Heart left ventricle (tissue), 16 donors: ENCODE measurements at regions of chr20 and their contacts with region 1.

Region 1: DNA sequence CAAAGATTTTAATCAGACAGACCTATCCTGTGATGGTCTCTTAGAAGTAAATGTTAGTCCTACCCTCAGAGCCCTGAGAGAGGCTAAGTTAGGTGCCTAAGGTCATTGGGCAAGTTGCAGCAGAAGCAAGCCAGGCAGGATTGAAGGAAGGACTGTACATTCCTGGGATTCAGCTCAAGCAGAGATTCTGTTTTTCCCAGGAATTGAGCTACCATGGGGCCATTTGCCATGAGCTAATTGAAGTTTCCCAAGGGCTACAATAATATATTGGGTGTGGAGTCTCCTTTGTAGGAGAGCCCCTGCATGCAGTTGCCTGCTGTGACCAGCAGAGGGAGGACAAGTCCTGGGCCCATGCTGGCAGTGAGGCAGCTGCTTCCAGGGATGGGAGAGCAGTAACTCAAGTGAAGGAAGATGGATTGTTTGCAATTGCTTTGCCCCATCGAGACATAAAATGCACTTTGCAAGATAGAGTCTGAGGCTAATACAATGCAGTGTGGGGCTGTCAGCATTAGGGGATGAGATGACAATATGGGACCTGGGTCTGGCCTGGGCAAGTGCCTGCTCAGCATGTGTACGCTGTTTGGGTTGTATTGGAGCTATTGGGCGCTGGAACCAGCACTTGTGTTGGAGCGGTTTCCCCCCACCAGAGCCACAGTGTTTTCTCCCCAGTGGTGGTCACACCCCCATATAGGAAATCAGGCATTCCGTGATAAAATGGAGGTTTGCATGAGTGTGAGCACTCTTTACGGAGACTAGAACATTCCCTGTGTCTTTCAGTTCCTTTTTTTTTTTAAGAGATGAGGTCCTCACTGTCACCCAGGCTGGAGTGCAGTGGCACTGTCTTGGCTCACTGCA is 27.9 kb downstream of the DNMT3B start:
- DNase-seq: peak; percentile 72 to 87 (median 75)
- ATAC-seq: peak; percentile 79 to 90 (median 88)
- H3K4me3 ChIP-seq: no peak overlapping the region
- H3K27ac ChIP-seq: no peak overlapping the region
- H3K4me1 ChIP-seq: peaks cover 0 to 15% (median 5%) of the 10 kb centered on the region in 12 donors
- H3K27me3 ChIP-seq: no peaks in the 10 kb centered on the region
- CTCF ChIP-seq: peak; percentile 96 to 99 (median 98)
- POLR2A ChIP-seq: no peak

Region 2: GRCh38 chr20:32877507-32877906 is 87.4 kb after region 1 on chr20:
- intact Hi-C with region 1: no loop called
- DNase-seq: peak in 1 of 5 donors; percentile 31
- ATAC-seq: peak in 1 of 4 donors; percentile 11
- H3K4me3 ChIP-seq: no peak overlapping the region
- H3K27ac ChIP-seq: no peak overlapping the region
- H3K4me1 ChIP-seq: peaks cover 0 to 5% (median 0%) of the 10 kb centered on the region in 12 donors
- H3K27me3 ChIP-seq: no peaks in the 10 kb centered on the region
- CTCF ChIP-seq: no peak
- POLR2A ChIP-seq: no peak

Region 3: DNA sequence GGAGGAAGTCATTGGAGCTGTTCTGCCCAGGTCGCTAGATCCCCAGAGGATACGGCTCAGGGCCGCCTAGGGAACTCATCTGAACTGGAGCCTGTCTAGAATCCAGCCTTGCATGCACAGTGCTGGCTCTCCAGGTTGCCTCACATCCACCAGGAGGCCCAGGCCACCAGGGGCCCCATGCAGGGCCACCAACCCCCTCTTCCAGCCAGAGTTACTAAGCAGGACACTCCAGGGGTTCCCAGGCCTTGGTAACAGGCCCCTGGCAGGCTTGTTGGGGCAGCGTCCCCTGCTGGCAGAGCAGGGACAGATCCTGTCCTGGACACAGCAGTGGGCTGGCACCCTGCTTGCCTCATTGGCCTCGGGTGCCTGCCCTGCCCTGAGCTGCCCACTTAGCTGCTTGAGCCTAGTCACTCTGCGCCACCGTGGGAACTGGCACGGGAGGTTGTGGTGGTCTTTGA is 103.9 kb after region 1 on chr20:
- intact Hi-C with region 1: loop called in 4 of 10 experiments (anchors 5 to 10 kb)
- DNase-seq: peak in 1 of 5 donors; percentile 37
- ATAC-seq: peak in 1 of 4 donors; percentile 35
- H3K4me3 ChIP-seq: no peak overlapping the region
- H3K27ac ChIP-seq: no peak overlapping the region
- H3K4me1 ChIP-seq: no peaks in the 10 kb centered on the region
- H3K27me3 ChIP-seq: no peaks in the 10 kb centered on the region
- CTCF ChIP-seq: peak in 9 of 12 donors; percentile 11 to 35 (median 29)
- POLR2A ChIP-seq: no peak

Region 4: DNA sequence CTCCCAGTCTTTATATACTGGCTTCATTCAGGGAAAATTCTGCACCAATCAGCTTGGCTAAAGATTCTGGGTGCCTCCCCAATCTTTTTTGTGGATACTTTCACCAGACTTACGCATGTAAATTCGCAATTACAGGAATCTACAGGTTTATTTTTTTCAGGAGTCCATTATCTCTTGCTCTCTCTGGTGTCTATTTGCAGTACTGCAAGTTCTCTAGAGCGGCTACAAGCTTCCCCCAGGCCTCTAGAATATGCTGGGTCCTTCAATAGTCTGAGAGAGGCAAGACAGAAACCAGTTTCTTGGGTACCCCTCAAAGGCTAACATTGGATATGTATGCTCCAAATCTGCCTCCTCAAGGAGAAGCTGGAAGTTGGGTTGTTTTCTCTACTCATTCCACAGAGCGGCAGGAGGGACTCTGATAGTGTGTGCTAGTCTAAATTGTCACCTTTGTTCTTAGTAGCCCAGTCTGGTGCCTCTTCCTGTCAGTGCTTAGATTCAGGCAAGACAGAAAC is 155.6 kb after region 1 on chr20:
- intact Hi-C with region 1: loop called in 1 of 10 experiments (anchors 10 kb)
- DNase-seq: no peak
- ATAC-seq: no peak
- H3K4me3 ChIP-seq: no peak overlapping the region
- H3K27ac ChIP-seq: no peak overlapping the region
- H3K4me1 ChIP-seq: no peaks in the 10 kb centered on the region
- H3K27me3 ChIP-seq: peaks cover 0 to 2% (median 0%) of the 10 kb centered on the region in 9 donors
- CTCF ChIP-seq: peak in 10 of 12 donors; percentile 9 to 39 (median 27)
- POLR2A ChIP-seq: no peak

Region 5: DNA sequence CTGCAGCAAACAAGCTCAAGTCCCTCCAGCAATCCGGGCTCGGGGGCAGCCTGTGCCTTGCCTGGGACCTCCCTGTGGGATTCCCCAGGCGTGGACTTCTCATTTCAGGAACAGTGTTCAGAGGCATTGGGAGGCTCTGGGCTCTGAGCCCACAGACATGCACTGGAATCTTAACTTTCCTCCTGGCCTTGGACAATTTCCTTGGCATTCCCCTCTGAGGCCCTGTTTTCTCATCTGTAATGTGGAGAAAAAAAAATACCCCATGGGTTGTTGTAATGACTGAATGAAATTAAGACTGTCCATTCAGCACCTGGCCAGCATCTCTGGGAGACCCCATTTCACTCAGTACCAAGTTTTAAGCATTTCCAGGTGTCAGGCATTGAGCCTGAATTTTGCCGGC is 306.9 kb after region 1 on chr20:
- intact Hi-C with region 1: loop called in 7 of 10 experiments (anchors 2 to 10 kb)
- DNase-seq: no peak
- ATAC-seq: no peak
- H3K4me3 ChIP-seq: no peak overlapping the region
- H3K27ac ChIP-seq: no peak overlapping the region
- H3K4me1 ChIP-seq: no peaks in the 10 kb centered on the region
- H3K27me3 ChIP-seq: no peaks in the 10 kb centered on the region
- CTCF ChIP-seq: no peak
- POLR2A ChIP-seq: no peak

Region 6: GRCh38 chr20:33299111-33299603 is 509.0 kb after region 1 on chr20:
- intact Hi-C with region 1: loop called in 5 of 10 experiments (anchors 2 to 10 kb)
- DNase-seq: peak; percentile 31 to 79 (median 53)
- ATAC-seq: peak in 3 of 4 donors; percentile 69 to 76 (median 72)
- H3K4me3 ChIP-seq: no peak overlapping the region
- H3K27ac ChIP-seq: no peak overlapping the region
- H3K4me1 ChIP-seq: peaks cover 0 to 6% (median 0%) of the 10 kb centered on the region in 12 donors
- H3K27me3 ChIP-seq: peaks cover 0 to 17% (median 0%) of the 10 kb centered on the region in 9 donors
- CTCF ChIP-seq: peak; percentile 71 to 90 (median 85)
- POLR2A ChIP-seq: no peak